ENCODE measurements at regions of chr13 and their contacts with region 1.

Region 1: GRCh38 chr13:40026174-40026585 is 370.7 kb downstream of the COG6 start:
- DNase-seq: peak; percentile 86
- ATAC-seq: peak; percentile 86
- H3K4me3 Mint-ChIP-seq: no peak overlapping the region
- H3K27ac Mint-ChIP-seq: peak overlapping the region; percentile 65
- H3K4me1 Mint-ChIP-seq: peaks cover 40% of the 10 kb centered on the region
- H3K27me3 Mint-ChIP-seq: peaks cover 5% of the 10 kb centered on the region
- CTCF ChIP-seq: no peak

Region 2: DNA sequence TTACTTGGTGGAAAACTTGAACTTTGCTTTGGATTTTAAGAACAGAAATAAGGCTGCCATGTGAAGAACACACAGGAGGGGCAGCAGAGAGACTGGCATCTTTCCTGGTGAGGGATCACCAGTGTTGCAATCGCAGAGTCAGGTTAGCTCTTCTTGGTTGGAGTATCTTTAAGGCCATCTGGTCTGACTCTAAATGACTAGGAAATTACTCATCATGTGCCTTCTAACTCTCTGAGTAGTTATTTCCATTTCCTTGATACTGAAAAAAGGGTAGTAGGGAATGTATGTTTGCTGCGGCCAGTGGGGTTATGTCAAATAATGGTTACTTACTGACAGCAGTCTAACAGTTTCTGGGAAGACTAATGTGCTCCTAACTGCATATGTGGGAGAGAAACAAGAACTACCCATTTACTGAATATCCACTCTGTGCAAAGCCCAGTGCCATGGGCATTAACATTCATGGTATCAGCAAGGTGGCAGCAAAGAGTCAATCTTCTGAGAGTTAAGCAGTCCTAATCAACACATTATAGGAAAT is 248.6 kb before region 1 on chr13:
- CTCF ChIA-PET with region 1: no interaction called
- POLR2A ChIA-PET with region 1: no interaction called
- intact Hi-C with region 1: loop called (anchors 5 kb)
- DNase-seq: peak; percentile 72
- ATAC-seq: peak; percentile 83
- H3K4me3 Mint-ChIP-seq: no peak overlapping the region
- H3K27ac Mint-ChIP-seq: peak overlapping the region; percentile 94
- H3K4me1 Mint-ChIP-seq: peaks cover 57% of the 10 kb centered on the region
- H3K27me3 Mint-ChIP-seq: no peaks in the 10 kb centered on the region
- CTCF ChIP-seq: peak; percentile 60

Region 3: GRCh38 chr13:39952249-39953233 is 73.6 kb before region 1 on chr13:
- CTCF ChIA-PET with region 1: interaction called, 6 read pairs
- POLR2A ChIA-PET with region 1: no interaction called
- intact Hi-C with region 1: loop called (anchors 5 kb)
- DNase-seq: peak; percentile 36
- ATAC-seq: peak; percentile 34
- H3K4me3 Mint-ChIP-seq: no peak overlapping the region
- H3K27ac Mint-ChIP-seq: peak overlapping the region; percentile 22
- H3K4me1 Mint-ChIP-seq: peaks cover 44% of the 10 kb centered on the region
- H3K27me3 Mint-ChIP-seq: no peaks in the 10 kb centered on the region
- CTCF ChIP-seq: no peak

Region 4: GRCh38 chr13:40517486-40518480 is 491.6 kb after region 1 on chr13:
- CTCF ChIA-PET with region 1: interaction called, 3 read pairs
- POLR2A ChIA-PET with region 1: no interaction called
- intact Hi-C with region 1: loop called (anchors 1 kb)
- DNase-seq: peak; percentile 66
- ATAC-seq: peak; percentile 80
- H3K4me3 Mint-ChIP-seq: peak overlapping the region; percentile 57
- H3K27ac Mint-ChIP-seq: peak overlapping the region; percentile 89
- H3K4me1 Mint-ChIP-seq: peaks cover 77% of the 10 kb centered on the region
- H3K27me3 Mint-ChIP-seq: no peaks in the 10 kb centered on the region
- CTCF ChIP-seq: no peak

Measured in activated CD8-positive, alpha-beta T cell treated with anti-CD3 and anti-CD28 coated beads for 36 hours (primary cell).